H1 (cell line): ENCODE measurements at regions of chr12 and their contacts with region 1.

Region 1: GRCh38 chr12:2034633-2035430 is 18.0 kb upstream of the CACNA1C start:
- DNase-seq: peak; percentile 67 to 95
- H3K4me3 ChIP-seq: peak overlapping the region in 3 of 4 experiments; percentile 15 to 50 (median 27); a peak in 5 of 8 replicates
- H3K27ac ChIP-seq: no peak overlapping the region
- H3K4me1 ChIP-seq: peaks cover 0 to 3% (median 1%) of the 10 kb centered on the region in 4 experiments; a peak in 2 of 7 replicates
- H3K27me3 ChIP-seq: peaks cover 0 to 23% (median 16%) of the 10 kb centered on the region in 4 experiments; a peak in 6 of 7 replicates
- CTCF ChIP-seq: peak; percentile 85 to 89 (median 88)
- EP300 ChIP-seq: no peak
- POLR2A ChIP-seq: no peak
- RAD21 ChIP-seq: peak; percentile 67 to 80

Region 2: GRCh38 chr12:2013527-2014223 is 21.2 kb before region 1 on chr12:
- CTCF ChIA-PET with region 1: interaction called, 29 read pairs
- POLR2A ChIA-PET with region 1: interaction called, 3 read pairs
- DNase-seq: no peak
- H3K4me3 ChIP-seq: no peak overlapping the region
- H3K27ac ChIP-seq: no peak overlapping the region
- H3K4me1 ChIP-seq: peaks cover 2 to 5% (median 3%) of the 10 kb centered on the region in 4 experiments; a peak in 5 of 7 replicates
- H3K27me3 ChIP-seq: no peaks in the 10 kb centered on the region
- CTCF ChIP-seq: no peak
- EP300 ChIP-seq: no peak
- POLR2A ChIP-seq: no peak
- RAD21 ChIP-seq: peak in 1 of 2 experiments; percentile 10; a peak in 1 of 4 replicates

Region 3: GRCh38 chr12:2023365-2023764 is 11.5 kb before region 1 on chr12:
- CTCF ChIA-PET with region 1: interaction called, 33 read pairs
- POLR2A ChIA-PET with region 1: interaction called, 3 read pairs
- DNase-seq: no peak
- H3K4me3 ChIP-seq: no peak overlapping the region
- H3K27ac ChIP-seq: no peak overlapping the region
- H3K4me1 ChIP-seq: peaks cover 0 to 2% (median 1%) of the 10 kb centered on the region in 4 experiments; a peak in 2 of 7 replicates
- H3K27me3 ChIP-seq: no peaks in the 10 kb centered on the region
- CTCF ChIP-seq: no peak
- EP300 ChIP-seq: no peak
- POLR2A ChIP-seq: no peak
- RAD21 ChIP-seq: no peak